B cell (primary cell): ENCODE measurements at regions of chr14 and their contacts with region 1.

Region 1: GRCh38 chr14:93239869-93240677 is 33.0 kb downstream of the UBR7 start:
- DNase-seq: no peak
- ATAC-seq: no peak
- H3K4me3 ChIP-seq: no peak overlapping the region
- H3K4me3 Mint-ChIP-seq: no peak overlapping the region
- H3K27ac ChIP-seq: no peak overlapping the region
- H3K27ac Mint-ChIP-seq: no peak overlapping the region
- H3K4me1 ChIP-seq: no peaks in the 10 kb centered on the region
- H3K4me1 Mint-ChIP-seq: no peaks in the 10 kb centered on the region
- H3K27me3 ChIP-seq: no peaks in the 10 kb centered on the region
- H3K27me3 Mint-ChIP-seq: no peaks in the 10 kb centered on the region
- CTCF ChIP-seq: no peak

Region 2: GRCh38 chr14:93317875-93318807 is 78.1 kb after region 1 on chr14:
- CTCF ChIA-PET with region 1: no interaction called
- POLR2A ChIA-PET with region 1: no interaction called
- intact Hi-C with region 1: loop called (anchors 10 kb)
- DNase-seq: no peak
- ATAC-seq: no peak
- H3K4me3 ChIP-seq: no peak overlapping the region
- H3K4me3 Mint-ChIP-seq: no peak overlapping the region
- H3K27ac ChIP-seq: no peak overlapping the region
- H3K27ac Mint-ChIP-seq: no peak overlapping the region
- H3K4me1 ChIP-seq: peaks cover 5 to 14% of the 10 kb centered on the region in 2 donors
- H3K4me1 Mint-ChIP-seq: peaks cover 37% of the 10 kb centered on the region
- H3K27me3 ChIP-seq: no peaks in the 10 kb centered on the region
- H3K27me3 Mint-ChIP-seq: no peaks in the 10 kb centered on the region
- CTCF ChIP-seq: no peak